ENCODE measurements at regions of chr17 and their contacts with region 1.

Region 1: GRCh38 chr17:76562734-76563148 is 22.9 kb downstream of the PRCD start:
- DNase-seq: no peak

Region 2: GRCh38 chr17:76481071-76481655 is 81.6 kb before region 1 on chr17:
- intact Hi-C with region 1: no loop called
- DNase-seq: peak; percentile 71

Region 3: GRCh38 chr17:76501018-76501826 is 61.5 kb before region 1 on chr17 and contains the start of gene RHBDF2:
- intact Hi-C with region 1: loop called in 1 of 2 experiments (anchors 2 kb)
- DNase-seq: peak; percentile 97
- total RNA-seq, gene RHBDF2: 26.7 to 31.4 TPM

Measured in posterior vena cava (tissue), 2 donors.